MCF 10A (cell line): ENCODE measurements at regions of chr9 and their contacts with region 1.

Region 1: GRCh38 chr9:69877854-69878514 is 57.4 kb downstream of the CFAP95 start:
- DNase-seq: peak; percentile 63
- H3K4me3 Mint-ChIP-seq: no peak overlapping the region
- H3K27ac Mint-ChIP-seq: no peak overlapping the region
- H3K4me1 Mint-ChIP-seq: peaks cover 8% of the 10 kb centered on the region
- H3K27me3 Mint-ChIP-seq: no peaks in the 10 kb centered on the region
- CTCF ChIP-seq: peak; percentile 58

Region 2: GRCh38 chr9:69549310-69550202 is 328.4 kb before region 1 on chr9:
- CTCF ChIA-PET with region 1: no interaction called
- POLR2A ChIA-PET with region 1: no interaction called
- intact Hi-C with region 1: loop called (anchors 1 kb)
- DNase-seq: peak; percentile 55
- H3K4me3 Mint-ChIP-seq: no peak overlapping the region
- H3K27ac Mint-ChIP-seq: no peak overlapping the region
- H3K4me1 Mint-ChIP-seq: peaks cover under 1% of the 10 kb centered on the region
- H3K27me3 Mint-ChIP-seq: peaks cover 66% of the 10 kb centered on the region
- CTCF ChIP-seq: peak; percentile 88

Region 3: GRCh38 chr9:69809304-69809863 is 68.6 kb before region 1 on chr9:
- CTCF ChIA-PET with region 1: no interaction called
- POLR2A ChIA-PET with region 1: no interaction called
- intact Hi-C with region 1: loop called (anchors 2 kb)
- DNase-seq: peak; percentile 40
- H3K4me3 Mint-ChIP-seq: no peak overlapping the region
- H3K27ac Mint-ChIP-seq: no peak overlapping the region
- H3K4me1 Mint-ChIP-seq: no peaks in the 10 kb centered on the region
- H3K27me3 Mint-ChIP-seq: peaks cover 16% of the 10 kb centered on the region
- CTCF ChIP-seq: no peak

Region 4: DNA sequence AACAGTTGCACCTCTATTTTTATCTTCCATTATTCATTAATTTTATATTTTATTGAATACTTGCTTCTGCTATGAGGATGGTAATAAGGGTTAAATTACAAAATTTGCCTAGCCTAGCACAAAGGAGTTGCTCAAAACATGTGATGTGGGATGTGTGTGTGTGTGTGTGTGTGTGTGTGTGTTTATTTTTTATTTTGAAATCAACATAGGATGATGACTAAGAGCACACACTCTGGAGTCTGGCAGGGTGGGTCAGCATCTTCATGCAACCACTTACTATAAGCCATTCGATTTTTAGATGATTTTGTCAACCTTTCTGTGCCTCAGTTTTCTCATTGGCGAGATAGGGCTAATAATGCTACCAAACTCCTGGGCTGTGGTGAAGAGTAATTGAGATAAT is 108.0 kb after region 1 on chr9:
- CTCF ChIA-PET with region 1: no interaction called
- POLR2A ChIA-PET with region 1: no interaction called
- intact Hi-C with region 1: no loop called
- DNase-seq: peak; percentile 35
- H3K4me3 Mint-ChIP-seq: no peak overlapping the region
- H3K27ac Mint-ChIP-seq: no peak overlapping the region
- H3K4me1 Mint-ChIP-seq: peaks cover 7% of the 10 kb centered on the region
- H3K27me3 Mint-ChIP-seq: no peaks in the 10 kb centered on the region
- CTCF ChIP-seq: no peak